ENCODE measurements at regions of chr3 and their contacts with region 1.

Region 1: DNA sequence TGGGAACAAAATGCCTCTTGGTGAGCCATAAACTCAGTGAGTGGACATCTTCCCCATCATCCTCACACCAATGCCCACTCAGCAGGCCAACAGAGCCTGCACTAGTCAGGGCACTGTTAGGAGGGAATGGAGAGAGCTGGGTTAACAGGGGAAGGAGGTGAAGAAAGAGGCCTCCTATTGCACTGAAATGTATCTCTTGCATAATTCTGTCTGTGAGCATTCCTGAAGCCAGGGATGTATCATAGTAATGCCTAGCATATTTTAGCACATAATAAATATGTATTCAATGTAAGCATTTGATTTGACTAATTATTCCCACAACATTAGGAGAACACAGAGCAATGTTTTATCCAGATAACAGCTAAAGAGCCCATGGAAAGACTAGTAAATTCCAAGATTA is 81.2 kb downstream of the ANO10 start:
- DNase-seq: no peak
- ATAC-seq: no peak
- H3K4me3 ChIP-seq: no peak overlapping the region
- H3K4me3 Mint-ChIP-seq: no peak overlapping the region
- H3K27ac ChIP-seq: no peak overlapping the region
- H3K27ac Mint-ChIP-seq: no peak overlapping the region
- H3K4me1 ChIP-seq: no peaks in the 10 kb centered on the region
- H3K4me1 Mint-ChIP-seq: no peaks in the 10 kb centered on the region
- H3K27me3 ChIP-seq: no peaks in the 10 kb centered on the region
- H3K27me3 Mint-ChIP-seq: no peaks in the 10 kb centered on the region
- CTCF ChIP-seq: no peak

Region 2: GRCh38 chr3:42300013-42300412 is 1240.6 kb before region 1 on chr3:
- CTCF ChIA-PET with region 1: no interaction called
- POLR2A ChIA-PET with region 1: no interaction called
- intact Hi-C with region 1: no loop called
- DNase-seq: peak in 6 of 9 experiments; percentile 2 to 35 (median 24)
- ATAC-seq: no peak
- H3K4me3 ChIP-seq: no peak overlapping the region
- H3K4me3 Mint-ChIP-seq: no peak overlapping the region
- H3K27ac ChIP-seq: no peak overlapping the region
- H3K27ac Mint-ChIP-seq: no peak overlapping the region
- H3K4me1 ChIP-seq: no peaks in the 10 kb centered on the region
- H3K4me1 Mint-ChIP-seq: peaks cover 3% of the 10 kb centered on the region
- H3K27me3 ChIP-seq: no peaks in the 10 kb centered on the region
- H3K27me3 Mint-ChIP-seq: peaks cover 13% of the 10 kb centered on the region
- CTCF ChIP-seq: no peak

Region 3: GRCh38 chr3:43638594-43639447 is 98.2 kb after region 1 on chr3:
- CTCF ChIA-PET with region 1: interaction called, 4 read pairs
- POLR2A ChIA-PET with region 1: no interaction called
- intact Hi-C with region 1: loop called (anchors 1 to 5 kb)
- DNase-seq: peak in 5 of 9 experiments; percentile 25 to 56 (median 46)
- ATAC-seq: peak; percentile 42
- H3K4me3 ChIP-seq: no peak overlapping the region
- H3K4me3 Mint-ChIP-seq: no peak overlapping the region
- H3K27ac ChIP-seq: no peak overlapping the region
- H3K27ac Mint-ChIP-seq: no peak overlapping the region
- H3K4me1 ChIP-seq: no peaks in the 10 kb centered on the region
- H3K4me1 Mint-ChIP-seq: no peaks in the 10 kb centered on the region
- H3K27me3 ChIP-seq: peaks cover 0 to 1% of the 10 kb centered on the region in 2 experiments
- H3K27me3 Mint-ChIP-seq: peaks cover 7% of the 10 kb centered on the region
- CTCF ChIP-seq: no peak

Region 4: GRCh38 chr3:43742920-43743319 is 202.3 kb after region 1 on chr3:
- CTCF ChIA-PET with region 1: interaction called, 4 read pairs
- POLR2A ChIA-PET with region 1: no interaction called
- intact Hi-C with region 1: loop called in 1 of 2 experiments (anchors 2 kb)
- DNase-seq: no peak
- ATAC-seq: no peak
- H3K4me3 ChIP-seq: no peak overlapping the region
- H3K4me3 Mint-ChIP-seq: no peak overlapping the region
- H3K27ac ChIP-seq: no peak overlapping the region
- H3K27ac Mint-ChIP-seq: no peak overlapping the region
- H3K4me1 ChIP-seq: no peaks in the 10 kb centered on the region
- H3K4me1 Mint-ChIP-seq: no peaks in the 10 kb centered on the region
- H3K27me3 ChIP-seq: no peaks in the 10 kb centered on the region
- H3K27me3 Mint-ChIP-seq: peaks cover 3% of the 10 kb centered on the region
- CTCF ChIP-seq: no peak

Region 5: GRCh38 chr3:43759297-43759782 is 218.7 kb after region 1 on chr3:
- CTCF ChIA-PET with region 1: interaction called, 16 read pairs
- POLR2A ChIA-PET with region 1: no interaction called
- intact Hi-C with region 1: loop called (anchors 1 to 5 kb)
- DNase-seq: peak in 2 of 9 experiments; percentile 25 to 37
- ATAC-seq: peak; percentile 43
- H3K4me3 ChIP-seq: no peak overlapping the region
- H3K4me3 Mint-ChIP-seq: no peak overlapping the region
- H3K27ac ChIP-seq: no peak overlapping the region
- H3K27ac Mint-ChIP-seq: no peak overlapping the region
- H3K4me1 ChIP-seq: peaks cover 40% of the 10 kb centered on the region
- H3K4me1 Mint-ChIP-seq: peaks cover 52% of the 10 kb centered on the region
- H3K27me3 ChIP-seq: no peaks in the 10 kb centered on the region
- H3K27me3 Mint-ChIP-seq: no peaks in the 10 kb centered on the region
- CTCF ChIP-seq: no peak

Region 6: GRCh38 chr3:44235604-44236484 is 695.2 kb after region 1 on chr3:
- CTCF ChIA-PET with region 1: interaction called, 9 read pairs
- POLR2A ChIA-PET with region 1: no interaction called
- intact Hi-C with region 1: loop called (anchors 1 to 2 kb)
- DNase-seq: peak; percentile 5 to 79 (median 60)
- ATAC-seq: peak; percentile 96
- H3K4me3 ChIP-seq: no peak overlapping the region
- H3K4me3 Mint-ChIP-seq: no peak overlapping the region
- H3K27ac ChIP-seq: no peak overlapping the region
- H3K27ac Mint-ChIP-seq: no peak overlapping the region
- H3K4me1 ChIP-seq: peaks cover 13% of the 10 kb centered on the region
- H3K4me1 Mint-ChIP-seq: peaks cover 13% of the 10 kb centered on the region
- H3K27me3 ChIP-seq: no peaks in the 10 kb centered on the region
- H3K27me3 Mint-ChIP-seq: peaks cover 12% of the 10 kb centered on the region
- CTCF ChIP-seq: peak; percentile 79

Measured in CD8-positive, alpha-beta T cell (primary cell).